HEK293 (cell line): ENCODE measurements at regions of chr20 and their contacts with region 1.

Region 1: DNA sequence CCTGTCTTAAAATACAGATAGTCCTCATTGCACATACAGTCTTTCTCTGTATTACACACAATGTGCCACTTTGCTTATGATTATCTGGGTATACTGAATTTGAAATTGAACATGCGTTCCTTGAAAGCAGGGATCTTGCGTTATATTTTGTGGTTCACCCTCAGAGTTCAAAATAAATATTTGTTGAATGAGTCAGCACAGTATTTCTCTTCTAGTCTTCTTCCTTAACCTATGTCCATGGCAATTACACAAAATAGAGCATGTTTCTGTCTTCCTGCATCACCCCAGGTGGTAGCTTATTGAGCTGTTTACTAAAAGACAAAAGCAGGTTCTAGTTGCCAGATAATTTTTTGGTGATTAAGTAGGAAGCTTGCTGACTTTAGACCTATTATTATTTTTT is 272.9 kb upstream of the FERMT1 start:
- H3K4me3 ChIP-seq: no peak overlapping the region
- H3K27ac ChIP-seq: no peak overlapping the region
- H3K4me1 ChIP-seq: no peaks in the 10 kb centered on the region
- CTCF ChIP-seq: no peak

Region 2: DNA sequence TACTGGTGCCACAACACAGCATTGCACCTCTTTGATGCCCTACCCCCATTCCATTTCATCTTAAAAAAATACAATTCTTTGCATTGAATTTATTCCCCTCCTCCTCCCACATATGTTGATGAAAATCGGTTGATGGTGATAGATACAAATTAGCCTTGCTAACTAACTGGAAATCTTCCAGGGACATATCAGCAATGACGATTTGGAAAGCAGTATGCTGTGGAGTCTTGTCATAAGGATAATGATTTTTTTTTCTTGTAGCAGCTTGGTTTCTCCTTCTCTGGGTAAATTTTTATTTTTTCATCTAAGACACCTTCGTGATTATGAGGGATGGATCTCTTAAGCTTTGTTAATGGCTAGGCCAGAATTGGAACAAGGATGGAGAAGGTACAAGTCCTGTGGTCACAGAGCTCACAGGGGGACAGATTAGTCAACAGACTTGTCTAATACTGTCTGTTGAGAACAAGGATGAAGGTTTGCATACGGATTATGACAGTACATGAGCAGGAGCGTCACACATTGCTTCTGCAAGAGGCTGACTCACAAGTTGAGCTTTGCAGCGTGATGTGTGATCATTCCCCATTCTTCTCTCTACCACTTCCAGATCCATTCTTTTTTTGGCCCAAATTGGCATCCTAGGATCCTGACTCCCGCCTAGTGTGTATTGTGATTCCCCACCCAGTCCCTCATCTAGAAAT is 39.8 kb before region 1 on chr20:
- CTCF ChIA-PET with region 1: no interaction called
- POLR2A ChIA-PET with region 1: no interaction called
- H3K4me3 ChIP-seq: no peak overlapping the region
- H3K27ac ChIP-seq: no peak overlapping the region
- H3K4me1 ChIP-seq: no peaks in the 10 kb centered on the region
- CTCF ChIP-seq: no peak

Region 3: GRCh38 chr20:6381887-6382286 is 13.8 kb before region 1 on chr20:
- CTCF ChIA-PET with region 1: interaction called, 14 read pairs
- POLR2A ChIA-PET with region 1: no interaction called
- H3K4me3 ChIP-seq: no peak overlapping the region
- H3K27ac ChIP-seq: no peak overlapping the region
- H3K4me1 ChIP-seq: no peaks in the 10 kb centered on the region
- CTCF ChIP-seq: no peak